Pancreas (tissue), 10 donors: ENCODE measurements at regions of chr5 and their contacts with region 1.

Region 1: GRCh38 chr5:138449501-138450239 is 10.8 kb downstream of the REEP2 start:
- DNase-seq: peak; percentile 76 to 97 (median 90)
- ATAC-seq: peak; percentile 94 to 99 (median 96)
- H3K4me3 ChIP-seq: no peak overlapping the region
- H3K27ac ChIP-seq: no peak overlapping the region
- H3K4me1 ChIP-seq: no peaks in the 10 kb centered on the region
- H3K27me3 ChIP-seq: no peaks in the 10 kb centered on the region
- CTCF ChIP-seq: peak; percentile 90 to 95 (median 94)

Region 2: GRCh38 chr5:138503487-138504270 is 54.0 kb after region 1 on chr5:
- intact Hi-C with region 1: loop called (anchors 5 to 10 kb)
- DNase-seq: peak in 1 of 6 donors; percentile 53
- ATAC-seq: peak; percentile 82 to 96 (median 89)
- H3K4me3 ChIP-seq: no peak overlapping the region
- H3K27ac ChIP-seq: no peak overlapping the region
- H3K4me1 ChIP-seq: peaks cover 0 to 6% (median 0%) of the 10 kb centered on the region in 3 donors
- H3K27me3 ChIP-seq: no peaks in the 10 kb centered on the region
- CTCF ChIP-seq: peak; percentile 63 to 77 (median 68)

Region 3: DNA sequence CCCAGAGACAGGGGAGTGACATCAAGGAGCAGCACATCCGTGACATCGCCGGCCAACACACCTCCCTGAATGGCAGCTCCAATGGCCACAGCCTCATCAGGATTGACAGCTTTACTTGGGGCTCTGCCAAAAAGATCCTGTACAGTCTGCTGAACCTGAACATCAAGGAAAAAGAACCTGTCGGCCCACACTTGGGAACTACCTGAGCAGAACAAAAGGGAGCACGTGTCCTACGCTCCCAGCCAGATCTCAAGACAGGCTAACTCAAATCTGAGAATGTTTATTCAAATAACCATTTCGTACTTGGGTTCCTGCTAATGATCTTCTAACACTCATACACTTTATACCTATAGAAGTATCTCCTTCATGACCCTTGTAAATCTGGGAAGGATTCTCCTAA is 110.3 kb after region 1 on chr5:
- intact Hi-C with region 1: loop called in 1 of 3 experiments (anchors 10 kb)
- DNase-seq: no peak
- ATAC-seq: peak in 1 of 4 donors; percentile 38
- H3K4me3 ChIP-seq: no peak overlapping the region
- H3K27ac ChIP-seq: no peak overlapping the region
- H3K4me1 ChIP-seq: no peaks in the 10 kb centered on the region
- H3K27me3 ChIP-seq: no peaks in the 10 kb centered on the region
- CTCF ChIP-seq: no peak